Posterior cingulate gyrus (tissue), 11 donors: ENCODE measurements at regions of chr12 and their contacts with region 1.

Region 1: GRCh38 chr12:53198486-53199110 is 8.5 kb downstream of the ITGB7 start:
- DNase-seq: no peak

Region 2: DNA sequence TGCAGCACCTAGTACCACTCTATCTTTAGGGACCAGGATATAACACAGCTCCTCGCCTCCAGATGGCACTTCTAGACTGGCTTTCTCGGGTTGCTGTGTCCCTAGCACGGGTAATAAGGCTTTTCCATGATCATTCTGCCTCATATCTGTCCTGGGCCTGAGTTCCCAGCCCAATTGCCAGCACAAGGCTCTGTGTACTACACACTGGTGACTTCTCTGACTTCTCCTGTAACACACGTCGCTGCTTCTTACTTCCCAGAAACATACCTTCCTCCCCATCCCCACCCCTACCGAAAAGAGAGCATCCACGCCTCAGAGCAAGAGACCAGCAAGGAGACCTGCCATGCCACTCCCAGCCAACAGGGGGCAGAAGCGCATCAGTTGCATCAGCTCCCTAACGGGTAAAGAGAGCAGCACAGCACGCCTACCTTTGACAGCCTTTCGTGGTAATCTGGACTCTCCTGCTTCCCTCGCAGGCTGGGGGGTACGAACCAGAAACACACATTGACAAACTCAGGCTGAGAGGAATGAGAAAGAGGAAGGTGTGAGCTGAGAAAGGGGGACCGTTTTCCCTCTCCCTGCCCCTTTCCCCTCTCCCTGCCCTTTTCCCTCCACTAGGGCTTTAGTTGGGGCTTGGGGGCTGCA is 39.3 kb before region 1 on chr12:
- intact Hi-C with region 1: loop called (anchors 1 kb)
- DNase-seq: peak; percentile 46 to 97 (median 80)